Dendritic cell treated with granulocyte-macrophage colony-stimulating factor and Interleukin-4, amounts not matched to agents 40 ng/mL and 50 ng/mL, for 4 days (primary cell): ENCODE measurements at regions of chr7 and their contacts with region 1.

Region 1: GRCh38 chr7:134943764-134944400 is 42.4 kb upstream of the AGBL3 start:
- H3K4me3 Mint-ChIP-seq: no peak overlapping the region
- H3K27ac Mint-ChIP-seq: no peak overlapping the region
- H3K4me1 Mint-ChIP-seq: peaks cover 14% of the 10 kb centered on the region
- H3K27me3 Mint-ChIP-seq: peaks cover 3% of the 10 kb centered on the region

Region 2: DNA sequence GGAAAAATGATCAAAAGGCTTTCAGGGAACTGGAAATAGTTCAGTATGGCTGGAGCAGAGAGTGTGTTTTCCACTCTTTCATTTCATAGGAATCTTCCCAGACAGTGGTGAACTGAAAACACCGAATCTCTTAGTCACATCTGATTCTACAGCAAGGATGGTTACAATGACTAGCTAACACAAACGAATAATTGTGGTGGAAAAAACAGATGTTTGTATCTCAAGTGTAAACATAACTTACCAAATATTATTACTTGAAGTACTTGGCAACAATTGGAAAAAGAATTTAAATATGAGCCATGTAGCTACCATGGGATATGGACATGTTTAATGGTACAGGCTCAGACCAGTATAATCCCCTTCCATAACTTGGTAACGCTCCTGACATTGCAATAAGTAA is 318.3 kb before region 1 on chr7:
- intact Hi-C with region 1: loop called (anchors 5 kb)
- H3K4me3 Mint-ChIP-seq: no peak overlapping the region
- H3K27ac Mint-ChIP-seq: no peak overlapping the region
- H3K4me1 Mint-ChIP-seq: peaks cover 17% of the 10 kb centered on the region
- H3K27me3 Mint-ChIP-seq: peaks cover 7% of the 10 kb centered on the region

Region 3: GRCh38 chr7:134690016-134690415 is 253.9 kb before region 1 on chr7:
- intact Hi-C with region 1: loop called (anchors 2 kb)
- H3K4me3 Mint-ChIP-seq: no peak overlapping the region
- H3K27ac Mint-ChIP-seq: no peak overlapping the region
- H3K4me1 Mint-ChIP-seq: peaks cover 45% of the 10 kb centered on the region
- H3K27me3 Mint-ChIP-seq: peaks cover 15% of the 10 kb centered on the region

Region 4: DNA sequence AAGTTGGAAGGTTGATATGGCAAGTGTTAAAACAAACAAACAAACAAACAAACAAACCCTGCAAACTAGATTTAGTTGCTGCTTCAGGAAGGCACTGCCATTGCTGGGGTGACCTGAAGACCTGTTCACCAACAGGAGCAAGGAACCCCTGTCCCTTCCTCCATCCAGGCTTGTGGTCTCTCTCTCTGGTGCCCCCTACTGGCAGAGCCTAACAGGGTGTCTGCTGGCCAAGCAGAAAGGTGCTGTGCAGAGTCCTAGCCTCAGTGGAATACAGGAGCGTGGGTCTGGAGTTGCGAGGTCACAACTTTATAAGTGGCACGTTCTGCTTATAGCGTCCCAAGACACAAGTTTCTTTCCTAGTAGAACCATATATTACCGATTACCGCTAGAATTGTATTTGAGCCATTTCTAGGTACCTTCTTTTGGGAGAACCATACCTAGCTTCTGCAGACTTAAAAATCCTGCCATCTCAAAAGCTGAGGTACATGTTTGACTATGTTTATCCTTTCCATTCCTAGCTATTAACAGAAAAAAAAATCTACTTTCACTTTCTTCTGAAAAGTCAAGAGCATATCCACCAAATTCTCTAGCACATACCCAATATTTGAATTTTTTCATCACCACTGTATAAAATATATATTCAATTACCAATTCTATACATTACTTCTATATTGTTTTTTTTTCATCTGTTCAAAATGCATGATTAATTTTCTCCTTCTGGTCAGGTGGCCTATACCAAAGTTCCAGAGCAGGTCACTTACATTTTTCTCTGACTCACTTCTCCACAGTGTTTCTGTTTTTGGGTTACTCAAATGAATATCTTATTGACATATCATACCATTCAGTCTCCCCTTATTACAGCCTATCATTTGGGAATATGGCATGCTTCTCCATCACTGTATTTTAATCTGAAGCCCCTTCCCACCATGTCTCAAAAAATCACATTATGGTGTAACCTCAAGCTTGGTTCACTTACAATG is 193.5 kb before region 1 on chr7:
- intact Hi-C with region 1: loop called (anchors 10 kb)
- H3K4me3 Mint-ChIP-seq: no peak overlapping the region
- H3K27ac Mint-ChIP-seq: no peak overlapping the region
- H3K4me1 Mint-ChIP-seq: peaks cover 25% of the 10 kb centered on the region
- H3K27me3 Mint-ChIP-seq: peaks cover 1% of the 10 kb centered on the region

Region 5: DNA sequence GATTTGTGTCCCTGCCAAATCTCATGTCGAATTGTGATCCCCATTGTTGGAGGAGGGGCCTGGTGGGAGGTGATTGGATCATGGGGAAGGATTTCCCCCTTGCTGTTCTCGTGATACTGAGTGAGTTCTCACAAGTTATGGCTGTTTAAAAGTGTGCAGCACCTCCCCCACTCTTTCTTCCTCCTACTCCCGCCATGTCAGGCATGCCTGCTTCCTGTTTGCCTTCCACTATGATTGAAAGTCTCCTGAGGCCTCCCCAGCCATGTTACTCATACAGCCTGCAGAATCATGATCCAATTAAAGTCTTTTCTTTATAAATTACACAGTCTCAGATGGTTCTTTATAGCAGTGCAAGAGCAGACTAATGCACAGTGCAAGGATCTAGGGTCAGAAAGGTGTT is 89.1 kb before region 1 on chr7:
- intact Hi-C with region 1: no loop called
- H3K4me3 Mint-ChIP-seq: no peak overlapping the region
- H3K27ac Mint-ChIP-seq: no peak overlapping the region
- H3K4me1 Mint-ChIP-seq: peaks cover 18% of the 10 kb centered on the region
- H3K27me3 Mint-ChIP-seq: peaks cover 1% of the 10 kb centered on the region

Region 6: DNA sequence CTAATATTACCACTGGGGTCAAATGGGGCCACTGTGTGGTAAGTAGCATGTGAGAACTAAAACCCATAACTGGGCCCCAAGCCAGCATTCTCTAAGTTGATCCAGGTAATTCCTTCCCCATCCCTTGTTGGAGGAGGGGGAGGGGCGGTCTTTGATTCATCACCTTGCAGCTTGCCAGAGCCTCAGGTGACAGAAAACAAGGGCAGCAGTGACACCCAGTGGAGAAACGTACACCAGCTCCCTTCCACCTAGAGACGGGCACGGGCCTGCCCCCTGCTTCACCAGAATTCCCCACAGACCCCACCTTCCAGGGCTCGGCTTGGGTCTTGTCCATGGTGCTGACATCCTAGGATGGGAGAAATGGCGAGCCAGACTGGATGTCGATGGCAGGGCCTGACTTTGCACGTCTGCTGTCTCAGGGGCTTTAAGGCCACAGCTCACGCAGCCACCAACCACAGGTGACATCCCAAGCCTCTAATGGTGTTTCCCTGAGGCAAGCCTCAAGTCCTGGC is 391.8 kb after region 1 on chr7:
- intact Hi-C with region 1: no loop called
- H3K4me3 Mint-ChIP-seq: no peak overlapping the region
- H3K27ac Mint-ChIP-seq: no peak overlapping the region
- H3K4me1 Mint-ChIP-seq: no peaks in the 10 kb centered on the region
- H3K27me3 Mint-ChIP-seq: no peaks in the 10 kb centered on the region